H1 (cell line): ENCODE measurements at regions of chr12 and their contacts with region 1.

Region 1: GRCh38 chr12:3041558-3042164 is 35.5 kb upstream of the TSPAN9 start:
- DNase-seq: peak; percentile 34 to 69
- H3K4me3 ChIP-seq: no peak overlapping the region
- H3K27ac ChIP-seq: no peak overlapping the region
- H3K4me1 ChIP-seq: no peaks in the 10 kb centered on the region; a peak in 1 of 7 replicates
- H3K27me3 ChIP-seq: no peaks in the 10 kb centered on the region
- CTCF ChIP-seq: peak; percentile 61 to 79 (median 79)
- EP300 ChIP-seq: no peak
- POLR2A ChIP-seq: no peak
- RAD21 ChIP-seq: peak; percentile 69 to 74

Region 2: DNA sequence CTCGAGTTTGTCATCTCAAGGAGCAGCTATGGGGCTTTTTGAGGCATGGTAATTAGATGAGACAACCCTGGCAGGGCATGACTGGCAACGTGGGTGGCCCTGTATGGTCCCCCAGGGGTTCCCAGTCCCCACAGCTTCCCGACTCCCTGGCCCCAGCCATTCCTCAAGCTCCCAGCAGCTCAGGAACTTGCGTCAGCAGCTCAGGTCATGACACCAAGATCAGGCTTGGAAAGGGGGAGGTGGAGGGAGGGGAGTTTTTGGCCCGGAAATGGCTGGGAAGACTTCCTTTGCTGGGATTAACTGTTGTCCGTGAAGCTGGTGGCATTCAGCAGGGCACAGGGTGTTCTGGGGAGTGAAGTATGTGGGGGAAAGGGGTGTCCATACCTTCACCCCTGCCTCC is 196.4 kb before region 1 on chr12:
- CTCF ChIA-PET with region 1: interaction called, 11 read pairs
- POLR2A ChIA-PET with region 1: no interaction called
- DNase-seq: no peak
- H3K4me3 ChIP-seq: no peak overlapping the region
- H3K27ac ChIP-seq: no peak overlapping the region
- H3K4me1 ChIP-seq: peaks cover 0 to 4% (median 3%) of the 10 kb centered on the region in 4 experiments; a peak in 6 of 7 replicates
- H3K27me3 ChIP-seq: no peaks in the 10 kb centered on the region
- CTCF ChIP-seq: no peak
- EP300 ChIP-seq: no peak
- POLR2A ChIP-seq: no peak
- RAD21 ChIP-seq: no peak

Region 3: GRCh38 chr12:2884810-2885209 is 156.9 kb before region 1 on chr12:
- CTCF ChIA-PET with region 1: interaction called, 11 read pairs
- POLR2A ChIA-PET with region 1: no interaction called
- DNase-seq: no peak
- H3K4me3 ChIP-seq: no peak overlapping the region
- H3K27ac ChIP-seq: no peak overlapping the region
- H3K4me1 ChIP-seq: peaks cover 0 to 5% (median 0%) of the 10 kb centered on the region in 4 experiments; a peak in 4 of 7 replicates
- H3K27me3 ChIP-seq: no peaks in the 10 kb centered on the region
- CTCF ChIP-seq: no peak
- EP300 ChIP-seq: no peak
- POLR2A ChIP-seq: no peak
- RAD21 ChIP-seq: no peak

Region 4: GRCh38 chr12:3004655-3005565 is 36.8 kb before region 1 on chr12:
- CTCF ChIA-PET with region 1: interaction called, 13 read pairs
- POLR2A ChIA-PET with region 1: no interaction called
- DNase-seq: no peak
- H3K4me3 ChIP-seq: no peak overlapping the region
- H3K27ac ChIP-seq: no peak overlapping the region
- H3K4me1 ChIP-seq: peaks cover 0 to 9% (median 6%) of the 10 kb centered on the region in 4 experiments; a peak in 5 of 7 replicates
- H3K27me3 ChIP-seq: no peaks in the 10 kb centered on the region
- CTCF ChIP-seq: peak; percentile 45 to 73 (median 58)
- EP300 ChIP-seq: no peak
- POLR2A ChIP-seq: no peak
- RAD21 ChIP-seq: peak; percentile 12 to 41; a peak in 2 of 4 replicates

Region 5: GRCh38 chr12:3060778-3061458 is 19.3 kb after region 1 on chr12:
- CTCF ChIA-PET with region 1: interaction called, 11 read pairs
- POLR2A ChIA-PET with region 1: interaction called, 3 read pairs
- DNase-seq: no peak
- H3K4me3 ChIP-seq: no peak overlapping the region
- H3K27ac ChIP-seq: no peak overlapping the region
- H3K4me1 ChIP-seq: peaks cover 0 to 13% (median 3%) of the 10 kb centered on the region in 4 experiments; a peak in 5 of 7 replicates
- H3K27me3 ChIP-seq: no peaks in the 10 kb centered on the region; a peak in 1 of 7 replicates
- CTCF ChIP-seq: no peak
- EP300 ChIP-seq: no peak
- POLR2A ChIP-seq: no peak
- RAD21 ChIP-seq: no peak